Mammary epithelial cell (primary cell): ENCODE measurements at regions of chr22 and their contacts with region 1.

Region 1: DNA sequence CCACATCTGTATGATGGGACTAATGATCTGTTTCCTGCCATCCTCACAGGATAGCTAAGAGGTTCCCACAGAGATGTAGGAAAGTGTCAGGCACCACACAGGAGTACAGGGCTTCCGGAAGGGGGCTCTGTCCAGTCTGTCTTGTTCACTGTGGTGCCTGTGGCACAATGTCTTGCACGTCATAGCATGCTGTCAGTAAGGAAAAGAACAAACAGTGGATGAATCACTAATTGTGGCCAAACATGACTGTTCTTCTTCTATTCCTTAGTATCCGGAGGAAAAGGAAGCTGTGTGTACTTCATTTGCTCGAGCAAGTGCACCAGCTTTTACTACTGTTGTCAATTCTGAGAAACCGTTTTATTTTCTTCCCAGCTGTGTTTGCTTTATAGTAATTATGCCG is 73.4 kb upstream of the YWHAH start:
- DNase-seq: peak; percentile 93
- H3K4me3 ChIP-seq: no peak overlapping the region
- H3K27ac ChIP-seq: peak overlapping the region; percentile 59
- H3K4me1 ChIP-seq: peaks cover 27% of the 10 kb centered on the region
- H3K27me3 ChIP-seq: no peaks in the 10 kb centered on the region
- CTCF ChIP-seq: peak in 1 of 2 donors; percentile 63

Region 2: GRCh38 chr22:31680861-31681341 is 190.0 kb before region 1 on chr22:
- CTCF ChIA-PET with region 1: no interaction called
- dilution Hi-C with region 1: loop called (anchors 5 kb)
- in situ Hi-C with region 1: no loop called
- intact Hi-C with region 1: no loop called
- DNase-seq: peak; percentile 60
- H3K4me3 ChIP-seq: no peak overlapping the region
- H3K27ac ChIP-seq: peak overlapping the region; percentile 44
- H3K4me1 ChIP-seq: peaks cover 47% of the 10 kb centered on the region
- H3K27me3 ChIP-seq: no peaks in the 10 kb centered on the region
- CTCF ChIP-seq: no peak

Region 3: GRCh38 chr22:31906569-31906968 is 35.7 kb after region 1 on chr22:
- CTCF ChIA-PET with region 1: no interaction called
- dilution Hi-C with region 1: loop called (anchors 5 kb)
- in situ Hi-C with region 1: no loop called
- intact Hi-C with region 1: no loop called
- DNase-seq: no peak
- H3K4me3 ChIP-seq: no peak overlapping the region
- H3K27ac ChIP-seq: no peak overlapping the region
- H3K4me1 ChIP-seq: no peaks in the 10 kb centered on the region
- H3K27me3 ChIP-seq: no peaks in the 10 kb centered on the region
- CTCF ChIP-seq: no peak